Activated T-helper 2 cell treated with anti-CD3 and anti-CD28 coated beads, Interferon-gamma antibody, Interleukin-2, Interleukin-4, amounts not matched to agents 10 μg/mL and 5 μg/mL and 100 μg/mL, durations not matched to agents 14 hours and 24 hours and 36 hours (primary cell): ENCODE measurements at regions of chr1 and their contacts with region 1.

Region 1: DNA sequence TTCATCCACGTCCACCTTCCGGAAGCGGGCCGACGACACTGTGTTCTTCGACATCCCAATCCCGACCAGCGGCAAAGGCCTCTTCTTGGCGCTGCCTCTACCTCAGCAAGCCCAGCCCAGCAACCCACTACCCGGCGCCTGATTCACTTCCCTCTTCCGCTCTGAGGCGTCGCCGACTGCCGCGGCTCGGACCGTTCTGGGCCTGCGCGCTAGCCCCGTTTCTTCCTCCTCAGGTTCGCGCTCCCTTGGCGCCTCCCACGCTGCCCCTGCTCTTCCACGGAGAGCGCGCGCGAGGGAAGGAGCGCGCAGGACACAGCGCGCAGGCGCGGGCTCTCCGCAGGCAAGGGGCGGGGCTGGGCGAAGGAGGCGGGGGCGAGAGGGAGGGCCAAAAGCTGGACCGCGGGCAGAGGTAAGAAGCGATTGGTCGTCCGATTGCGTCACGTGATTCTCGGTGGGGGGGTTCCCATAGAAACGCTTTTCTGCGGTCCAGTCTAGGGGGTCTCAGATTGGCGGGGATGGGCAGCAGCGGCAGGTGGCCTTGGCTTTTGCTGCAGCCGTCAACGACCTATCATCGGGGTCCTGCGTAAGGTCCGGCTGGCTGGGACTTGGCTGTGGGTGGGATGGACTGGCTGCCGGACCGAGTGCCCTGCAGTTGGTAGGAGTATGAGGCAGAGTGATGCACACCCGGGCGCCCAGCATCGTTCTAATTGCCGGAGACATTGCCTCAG is at the start of gene ARPC5:
- DNase-seq: peak; percentile 96
- H3K4me3 Mint-ChIP-seq: peak within 1 kb of the TSS; percentile 100
- H3K27ac Mint-ChIP-seq: peak within 1 kb of the TSS; percentile 100
- H3K4me1 Mint-ChIP-seq: peaks cover 34% of the 10 kb centered on the region
- H3K27me3 Mint-ChIP-seq: peaks cover 11% of the 10 kb centered on the region
- total RNA-seq, gene ARPC5: 160 and 169 TPM in 2 replicates

Region 2: DNA sequence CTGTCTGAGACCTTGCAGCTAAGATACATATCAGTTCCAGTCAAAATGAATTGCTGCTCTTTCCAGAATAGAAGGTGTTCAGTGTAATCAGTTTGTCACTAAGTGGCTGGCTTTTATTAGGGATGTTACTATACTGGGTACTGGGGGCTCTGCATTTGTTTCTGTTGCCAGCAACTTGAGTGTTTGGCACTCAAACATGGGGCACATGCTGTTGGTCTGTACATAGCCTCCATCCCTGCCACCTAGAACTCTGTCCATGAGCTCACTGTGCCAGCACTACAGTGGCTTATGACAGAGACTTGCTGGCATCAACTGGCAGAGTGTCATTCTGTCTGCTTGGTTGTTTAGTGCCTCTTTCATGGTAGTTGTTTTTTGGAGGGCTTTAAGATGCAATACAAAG is 1140.8 kb before region 1 on chr1:
- intact Hi-C with region 1: no loop called
- DNase-seq: no peak
- H3K4me3 Mint-ChIP-seq: no peak overlapping the region
- H3K27ac Mint-ChIP-seq: no peak overlapping the region
- H3K4me1 Mint-ChIP-seq: no peaks in the 10 kb centered on the region
- H3K27me3 Mint-ChIP-seq: peaks cover 3% of the 10 kb centered on the region

Region 3: DNA sequence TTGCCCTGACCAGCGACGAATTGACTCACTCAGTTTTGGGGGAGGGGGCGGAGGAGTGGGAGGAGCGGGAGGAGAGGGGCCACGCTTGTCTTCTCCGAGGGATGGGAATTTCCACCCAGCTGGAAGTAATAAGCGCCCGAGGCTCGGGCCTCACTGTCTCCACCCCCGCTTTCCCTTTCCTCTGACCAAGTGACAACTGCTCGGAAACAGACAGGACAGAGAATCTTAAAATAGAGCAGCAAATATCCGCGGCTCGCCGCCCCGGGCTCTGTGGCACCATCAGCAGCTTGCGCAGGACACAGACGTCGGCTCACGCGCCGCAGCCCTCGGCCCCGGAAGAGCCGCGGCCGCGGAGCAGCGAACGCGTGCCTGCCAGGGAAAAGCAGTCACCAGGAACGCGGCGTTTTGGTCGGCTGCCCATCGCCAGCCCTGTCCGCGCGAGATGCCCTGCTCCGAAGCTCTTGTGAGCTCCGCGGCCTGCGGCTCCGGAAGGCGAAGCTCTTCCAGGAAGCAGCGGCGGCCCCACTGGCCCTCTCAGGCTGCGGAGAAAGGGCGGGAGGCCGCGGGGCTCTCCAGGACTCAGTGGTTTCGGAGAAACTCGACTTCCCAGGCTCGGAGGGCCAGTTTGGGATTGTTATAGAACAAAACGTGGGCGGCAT is 1020.8 kb before region 1 on chr1:
- intact Hi-C with region 1: loop called (anchors 10 kb)
- DNase-seq: peak; percentile 31
- H3K4me3 Mint-ChIP-seq: peak overlapping the region; percentile 72
- H3K27ac Mint-ChIP-seq: peak overlapping the region; percentile 86
- H3K4me1 Mint-ChIP-seq: peaks cover 64% of the 10 kb centered on the region
- H3K27me3 Mint-ChIP-seq: peaks cover 32% of the 10 kb centered on the region

Region 4: DNA sequence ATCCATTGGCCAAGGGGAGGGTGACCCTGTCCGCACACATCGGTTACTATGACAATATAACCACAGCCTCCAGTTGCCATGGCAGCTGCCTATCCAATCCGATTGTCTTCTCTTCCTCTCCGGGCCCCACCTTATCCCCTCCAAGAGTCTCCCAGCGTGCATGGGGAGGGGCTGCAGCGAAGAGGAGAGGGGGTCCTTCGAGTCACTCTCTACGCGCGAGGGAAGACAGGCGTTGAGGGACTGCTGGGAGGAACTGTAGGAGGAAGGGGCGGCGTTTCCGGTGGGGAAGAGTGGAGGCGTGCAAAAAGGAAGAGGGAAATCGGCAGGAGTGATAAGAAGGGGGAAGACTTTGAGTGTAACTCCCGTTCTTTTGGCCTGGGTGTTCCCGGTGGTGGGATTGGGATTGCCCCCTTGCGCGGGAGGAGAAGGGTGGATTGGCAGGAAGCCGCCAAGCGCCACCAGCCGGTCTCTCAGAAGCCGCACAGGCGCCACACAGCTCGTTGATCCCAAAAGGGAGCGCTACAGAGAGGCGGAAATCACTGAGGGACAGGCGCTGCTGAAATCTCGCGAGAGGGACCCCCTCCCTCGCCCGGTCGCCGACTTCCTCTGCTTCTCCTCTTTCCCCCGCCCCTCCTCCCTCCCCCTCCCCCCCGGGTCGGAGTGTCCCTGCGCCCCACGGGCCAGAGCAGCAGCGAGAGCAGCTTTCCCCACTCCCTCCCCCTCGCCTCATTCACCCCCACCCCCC is 163.9 kb before region 1 on chr1:
- intact Hi-C with region 1: loop called (anchors 1 kb)
- DNase-seq: peak; percentile 92
- H3K4me3 Mint-ChIP-seq: peak overlapping the region; percentile 87
- H3K27ac Mint-ChIP-seq: peak overlapping the region; percentile 99
- H3K4me1 Mint-ChIP-seq: peaks cover 24% of the 10 kb centered on the region
- H3K27me3 Mint-ChIP-seq: no peaks in the 10 kb centered on the region

Region 5: GRCh38 chr1:183622884-183623785 is 12.6 kb before region 1 on chr1:
- intact Hi-C with region 1: no loop called
- DNase-seq: peak; percentile 28
- H3K4me3 Mint-ChIP-seq: no peak overlapping the region
- H3K27ac Mint-ChIP-seq: peak overlapping the region; percentile 11
- H3K4me1 Mint-ChIP-seq: peaks cover 14% of the 10 kb centered on the region
- H3K27me3 Mint-ChIP-seq: no peaks in the 10 kb centered on the region

Region 6: DNA sequence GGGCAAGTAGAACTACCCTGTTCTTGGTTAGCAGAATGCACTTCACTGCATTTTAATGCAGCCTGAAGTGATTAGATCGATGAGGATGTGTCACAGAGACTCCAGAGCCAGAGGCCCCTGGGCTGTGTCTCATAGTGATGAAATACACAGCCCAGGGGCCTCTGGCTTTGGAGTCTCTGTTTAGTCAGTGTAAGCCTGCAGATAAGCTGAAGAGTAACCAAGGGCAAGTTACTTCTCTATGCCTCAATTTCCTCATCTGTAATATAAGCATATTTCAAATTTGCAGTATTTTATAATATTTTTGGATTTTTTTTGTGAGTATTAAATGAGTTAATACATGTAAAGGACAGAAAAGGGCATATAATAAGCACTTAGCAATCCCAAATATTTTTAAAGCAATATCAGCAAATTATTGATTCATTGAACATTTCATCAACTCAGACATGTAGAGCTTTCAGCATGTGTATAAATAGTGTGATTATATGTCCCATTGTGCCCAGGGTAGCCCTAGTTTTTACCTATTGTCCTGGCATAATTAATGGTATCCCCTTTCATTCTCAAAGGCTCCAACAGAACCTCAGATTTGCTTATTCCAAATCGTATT is 40.9 kb after region 1 on chr1:
- intact Hi-C with region 1: no loop called
- DNase-seq: no peak
- H3K4me3 Mint-ChIP-seq: no peak overlapping the region
- H3K27ac Mint-ChIP-seq: no peak overlapping the region
- H3K4me1 Mint-ChIP-seq: no peaks in the 10 kb centered on the region
- H3K27me3 Mint-ChIP-seq: peaks cover 17% of the 10 kb centered on the region

Region 7: DNA sequence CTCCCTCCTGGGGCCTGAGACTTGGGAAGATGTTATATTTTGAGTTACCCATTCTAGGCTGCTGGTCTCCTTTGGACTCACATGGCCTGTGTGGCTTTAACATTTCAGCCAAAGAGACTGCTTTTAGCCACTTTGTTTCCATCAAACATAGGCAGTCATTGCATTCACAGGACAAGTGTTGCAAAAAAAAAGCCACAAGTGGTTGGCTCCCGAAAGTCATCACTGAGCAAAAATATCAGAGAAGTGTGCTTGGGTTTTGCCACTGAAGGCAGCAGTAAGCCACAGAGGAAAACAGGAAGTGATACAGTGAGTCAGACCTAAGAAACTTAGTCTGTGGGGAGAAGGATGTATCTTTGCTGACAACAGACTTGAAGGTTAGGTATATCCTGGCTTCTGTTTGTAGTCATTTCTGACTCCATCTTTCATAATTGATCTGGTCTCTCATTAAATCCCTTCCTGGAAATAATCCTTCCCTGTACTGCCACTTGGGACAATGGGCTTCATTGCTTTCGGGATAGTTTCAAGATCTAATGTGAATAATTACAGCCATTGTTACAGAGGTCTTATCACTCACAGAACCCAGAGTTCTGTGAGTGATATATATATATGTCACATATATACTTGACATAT is 320.9 kb after region 1 on chr1:
- intact Hi-C with region 1: loop called (anchors 2 kb)
- DNase-seq: peak; percentile 63
- H3K4me3 Mint-ChIP-seq: no peak overlapping the region
- H3K27ac Mint-ChIP-seq: peak overlapping the region; percentile 88
- H3K4me1 Mint-ChIP-seq: peaks cover 18% of the 10 kb centered on the region
- H3K27me3 Mint-ChIP-seq: no peaks in the 10 kb centered on the region

Region 8: DNA sequence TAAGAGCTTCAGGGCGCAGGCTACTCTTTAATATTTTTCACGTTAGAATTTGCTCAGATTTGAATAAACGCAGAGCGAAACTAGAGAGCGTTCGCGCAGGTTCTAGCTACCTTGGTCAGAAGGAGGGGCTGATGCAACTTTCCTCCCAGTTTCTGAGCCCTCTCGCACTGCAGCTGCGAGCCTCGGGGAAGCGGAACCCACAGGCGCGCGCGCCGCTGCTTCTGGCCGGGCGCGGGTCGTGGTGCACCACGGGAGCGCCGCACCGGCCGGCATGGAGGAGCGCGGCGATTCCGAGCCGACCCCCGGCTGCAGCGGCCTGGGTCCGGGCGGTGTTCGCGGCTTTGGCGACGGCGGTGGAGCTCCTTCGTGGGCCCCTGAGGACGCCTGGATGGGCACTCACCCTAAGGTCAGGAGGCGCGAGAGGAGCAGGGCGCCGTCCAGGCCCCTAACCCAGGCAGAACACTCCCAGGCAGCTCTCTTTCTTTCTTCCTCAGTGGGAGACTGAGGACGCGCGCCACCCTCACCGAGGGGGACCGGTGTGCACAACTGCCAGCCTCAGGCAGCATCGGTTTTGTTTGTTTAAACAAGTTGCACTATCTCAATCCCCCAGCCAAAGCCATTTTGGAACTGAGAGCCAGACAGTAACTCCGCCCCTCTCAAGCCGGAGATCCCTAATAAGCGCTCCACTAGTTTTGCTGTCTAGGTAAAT is 415.9 kb after region 1 on chr1 and contains the start of gene TSEN15:
- intact Hi-C with region 1: loop called (anchors 5 kb)
- DNase-seq: peak; percentile 69
- H3K4me3 Mint-ChIP-seq: peak within 1 kb of the TSS; percentile 100
- H3K27ac Mint-ChIP-seq: peak within 1 kb of the TSS; percentile 96
- H3K4me1 Mint-ChIP-seq: peaks cover 30% of the 10 kb centered on the region
- H3K27me3 Mint-ChIP-seq: peaks cover 31% of the 10 kb centered on the region
- total RNA-seq, gene TSEN15: 35.1 TPM in 2 replicates